ENCODE measurements at regions of chr16 and their contacts with region 1.

Region 1: DNA sequence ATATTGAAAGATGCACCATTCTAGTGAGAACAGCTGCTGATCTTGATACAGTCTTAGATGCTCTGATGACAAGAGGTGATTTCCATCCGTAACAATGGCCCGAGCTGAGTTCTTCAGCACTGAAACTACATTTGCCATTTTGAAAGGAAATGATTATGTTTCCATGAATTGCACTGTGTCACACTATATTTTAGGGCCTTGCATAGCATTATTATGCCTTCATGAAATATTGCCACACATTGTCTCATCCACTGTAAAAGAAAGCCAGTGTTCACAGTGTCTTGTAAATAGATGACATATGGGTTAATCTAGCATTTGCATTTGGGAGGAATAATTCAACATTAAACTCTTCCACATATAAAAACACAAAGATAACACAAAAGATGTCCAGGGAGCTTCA is 438.3 kb upstream of the PSMD7 start:
- DNase-seq: no peak
- H3K4me3 ChIP-seq: no peak overlapping the region
- H3K27ac ChIP-seq: no peak overlapping the region
- H3K4me1 ChIP-seq: peaks cover 0 to 9% (median 0%) of the 10 kb centered on the region in 4 donors
- H3K27me3 ChIP-seq: no peaks in the 10 kb centered on the region
- CTCF ChIP-seq: no peak
- EP300 ChIP-seq: no peak
- POLR2A ChIP-seq: no peak

Region 2: DNA sequence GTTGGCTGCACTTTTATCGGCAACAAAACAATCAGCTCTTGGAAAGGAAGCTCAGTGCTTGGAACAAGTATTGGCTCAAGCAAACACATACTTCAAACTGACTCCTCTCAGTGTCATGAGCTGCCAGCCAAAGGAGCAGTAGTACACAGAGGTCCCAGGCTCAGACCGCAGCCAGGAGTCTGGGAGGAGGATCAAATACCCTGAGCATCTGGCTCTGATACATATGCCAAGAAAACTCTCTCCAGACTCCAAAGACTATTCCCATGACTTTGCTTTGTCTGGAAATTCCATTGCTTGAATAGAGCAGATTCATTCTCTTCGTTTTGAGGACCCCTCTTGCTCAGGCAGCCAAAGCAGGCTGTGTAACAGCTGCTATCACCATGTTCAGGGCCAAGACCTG is 63.3 kb before region 1 on chr16:
- intact Hi-C with region 1: loop called (anchors 5 kb)
- DNase-seq: peak; percentile 86
- H3K4me3 ChIP-seq: no peak overlapping the region
- H3K27ac ChIP-seq: peak overlapping the region in 2 of 4 donors; percentile 44 to 47
- H3K4me1 ChIP-seq: peaks cover 0 to 46% (median 43%) of the 10 kb centered on the region in 4 donors
- H3K27me3 ChIP-seq: no peaks in the 10 kb centered on the region
- CTCF ChIP-seq: no peak
- EP300 ChIP-seq: no peak
- POLR2A ChIP-seq: no peak

Region 3: GRCh38 chr16:73912281-73912680 is 54.0 kb after region 1 on chr16:
- intact Hi-C with region 1: no loop called
- DNase-seq: no peak
- H3K4me3 ChIP-seq: no peak overlapping the region
- H3K27ac ChIP-seq: no peak overlapping the region
- H3K4me1 ChIP-seq: no peaks in the 10 kb centered on the region
- H3K27me3 ChIP-seq: no peaks in the 10 kb centered on the region
- CTCF ChIP-seq: no peak
- EP300 ChIP-seq: no peak
- POLR2A ChIP-seq: no peak

Measured in sigmoid colon (tissue), 7 donors.